Sciatic nerve (tissue), 2 donors: ENCODE measurements at regions of chr1 and their contacts with region 1.

Region 1: GRCh38 chr1:184973272-184974055 is 844 bp downstream of the NIBAN1 start:
- DNase-seq: peak; percentile 71
- ATAC-seq: peak; percentile 70

Region 2: DNA sequence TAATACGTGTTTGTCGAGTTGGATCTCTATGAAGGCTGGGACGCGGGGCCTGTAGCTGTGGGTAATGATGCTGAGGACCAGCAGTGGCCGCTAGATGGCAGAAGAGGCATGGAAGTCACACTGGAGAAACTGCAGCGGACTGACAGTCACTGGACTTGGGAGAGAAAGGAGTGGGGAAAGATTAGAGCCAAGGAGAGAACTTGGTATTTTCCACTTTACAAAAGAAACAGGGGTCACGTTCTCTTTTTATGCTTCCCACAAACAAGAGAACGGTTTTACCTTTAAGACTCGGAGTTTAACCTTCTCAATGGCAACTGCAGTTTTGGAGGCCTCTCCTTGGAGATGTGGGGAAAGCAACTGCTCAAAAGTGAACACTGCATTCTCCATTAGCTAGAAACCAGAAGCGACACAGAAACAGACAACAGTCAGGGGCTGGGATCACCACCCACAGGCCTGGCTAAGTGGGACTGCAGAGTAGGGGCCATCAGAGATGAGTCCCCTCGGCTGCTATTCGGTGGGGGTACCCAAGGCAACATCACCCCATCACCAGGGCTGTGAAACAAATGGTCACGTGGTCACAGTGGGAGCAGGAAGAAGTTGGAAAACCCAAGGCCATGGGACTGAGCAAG is 167.7 kb before region 1 on chr1:
- intact Hi-C with region 1: loop called (anchors 10 kb)
- DNase-seq: peak; percentile 95
- ATAC-seq: peak; percentile 92